GM12878 (cell line): ENCODE measurements at regions of chr3 and their contacts with region 1.

Region 1: DNA sequence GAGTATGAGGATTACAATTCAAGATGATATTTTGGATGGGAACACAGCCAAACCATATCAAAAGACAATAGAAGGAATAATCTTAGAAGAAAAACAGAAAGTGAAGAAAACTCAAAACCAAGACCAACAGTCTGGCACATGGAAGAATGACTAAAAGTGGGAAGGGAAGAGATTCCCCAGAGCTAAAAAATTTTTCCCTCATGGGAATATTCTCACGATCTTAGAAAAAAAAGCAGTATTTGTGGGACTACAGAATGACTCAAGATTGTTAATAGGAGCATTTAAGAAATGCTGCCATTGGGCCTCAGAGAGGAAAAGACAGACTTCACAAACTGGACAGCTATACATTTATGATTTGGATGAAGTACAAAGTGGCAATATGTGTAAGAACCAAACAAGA is 18.3 kb downstream of the OSTN start:
- DNase-seq: no peak
- ATAC-seq: no peak
- H3K4me3 ChIP-seq: no peak overlapping the region
- H3K27ac ChIP-seq: no peak overlapping the region
- H3K4me1 ChIP-seq: no peaks in the 10 kb centered on the region
- H3K27me3 ChIP-seq: no peaks in the 10 kb centered on the region
- CTCF ChIP-seq: no peak
- EP300 ChIP-seq: no peak
- POLR2A ChIP-seq: no peak
- RAD21 ChIP-seq: no peak

Region 2: DNA sequence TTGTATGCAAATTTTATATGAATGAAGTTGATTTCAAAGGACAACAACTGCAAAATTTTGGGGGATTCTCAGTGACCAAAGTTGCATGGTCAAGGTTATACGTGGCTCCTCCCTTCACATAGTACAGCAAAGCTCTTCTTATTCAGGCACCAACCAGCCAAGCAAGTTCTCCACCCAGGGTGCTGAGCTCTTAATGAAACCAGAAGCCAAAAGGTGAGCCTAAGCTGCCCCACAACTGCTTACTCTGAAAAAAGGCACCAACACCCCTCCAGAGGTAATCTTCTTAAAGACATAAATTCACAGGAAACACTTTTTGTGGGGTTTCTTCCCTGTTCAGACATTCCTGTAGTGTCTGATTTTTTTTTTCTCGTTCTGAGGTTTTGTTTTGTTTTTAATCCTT is 248.7 kb before region 1 on chr3:
- CTCF ChIA-PET with region 1: no interaction called
- POLR2A ChIA-PET with region 1: no interaction called
- RAD21 ChIA-PET with region 1: no interaction called
- SMC1A ChIA-PET with region 1: no interaction called
- in situ Hi-C with region 1: no loop called
- intact Hi-C with region 1: no loop called
- DNase-seq: no peak
- ATAC-seq: no peak
- H3K4me3 ChIP-seq: no peak overlapping the region
- H3K27ac ChIP-seq: no peak overlapping the region
- H3K4me1 ChIP-seq: no peaks in the 10 kb centered on the region
- H3K27me3 ChIP-seq: no peaks in the 10 kb centered on the region
- CTCF ChIP-seq: no peak
- EP300 ChIP-seq: no peak
- POLR2A ChIP-seq: no peak
- RAD21 ChIP-seq: no peak

Region 3: GRCh38 chr3:191085091-191085490 is 132.2 kb before region 1 on chr3:
- CTCF ChIA-PET with region 1: no interaction called
- POLR2A ChIA-PET with region 1: no interaction called
- RAD21 ChIA-PET with region 1: no interaction called
- SMC1A ChIA-PET with region 1: no interaction called
- in situ Hi-C with region 1: no loop called
- intact Hi-C with region 1: no loop called
- DNase-seq: no peak
- ATAC-seq: no peak
- H3K4me3 ChIP-seq: no peak overlapping the region
- H3K27ac ChIP-seq: no peak overlapping the region
- H3K4me1 ChIP-seq: no peaks in the 10 kb centered on the region
- H3K27me3 ChIP-seq: no peaks in the 10 kb centered on the region
- CTCF ChIP-seq: no peak
- EP300 ChIP-seq: no peak
- POLR2A ChIP-seq: no peak
- RAD21 ChIP-seq: no peak

Region 4: GRCh38 chr3:191275751-191276150 is 58.5 kb after region 1 on chr3:
- CTCF ChIA-PET with region 1: no interaction called
- POLR2A ChIA-PET with region 1: interaction called, 13 read pairs
- RAD21 ChIA-PET with region 1: no interaction called
- SMC1A ChIA-PET with region 1: no interaction called
- in situ Hi-C with region 1: no loop called
- intact Hi-C with region 1: no loop called
- DNase-seq: no peak
- ATAC-seq: peak; percentile 50
- H3K4me3 ChIP-seq: no peak overlapping the region
- H3K27ac ChIP-seq: no peak overlapping the region
- H3K4me1 ChIP-seq: no peaks in the 10 kb centered on the region
- H3K27me3 ChIP-seq: no peaks in the 10 kb centered on the region
- CTCF ChIP-seq: no peak
- EP300 ChIP-seq: no peak
- POLR2A ChIP-seq: no peak
- RAD21 ChIP-seq: no peak